Endothelial cell of umbilical vein (primary cell): ENCODE measurements at regions of chr1 and their contacts with region 1.

Region 1: DNA sequence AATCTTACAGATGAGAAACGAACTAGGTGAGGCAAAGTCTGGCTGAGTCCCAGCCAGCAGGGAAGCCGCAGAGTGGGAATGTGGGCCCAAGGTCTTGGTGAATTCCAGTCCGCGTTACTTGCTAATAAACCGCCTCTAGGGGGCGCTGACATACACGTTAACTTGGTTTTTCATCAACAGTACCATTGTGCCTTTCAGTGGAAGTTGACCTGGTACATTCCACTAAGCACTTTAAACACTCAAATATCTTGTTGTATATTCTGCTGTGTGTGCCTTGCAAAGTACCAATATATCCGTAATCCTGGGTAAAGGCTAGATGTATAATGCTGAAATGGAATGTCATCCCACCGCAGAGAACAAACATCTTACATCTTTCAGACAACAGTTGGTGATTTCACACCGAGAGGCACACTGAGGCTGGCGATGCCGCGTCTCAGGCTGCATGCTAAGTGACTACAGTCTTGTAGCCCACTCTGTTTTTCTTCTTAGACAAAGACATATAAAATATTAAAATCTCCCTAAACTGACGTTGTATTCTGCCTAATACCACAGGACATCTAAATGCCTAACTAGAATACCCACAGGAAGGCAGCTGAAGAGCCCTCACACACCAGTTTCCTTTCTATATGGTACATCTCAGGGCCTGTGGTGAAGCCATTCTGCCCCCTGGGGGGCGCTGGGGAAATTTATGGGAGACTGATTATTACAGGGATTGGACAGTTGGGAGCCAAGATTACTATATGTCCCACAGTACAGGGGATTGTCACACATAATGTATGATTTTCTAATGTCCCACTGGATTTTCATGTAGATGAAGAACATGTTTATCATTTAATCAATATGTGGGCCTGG is 49.2 kb upstream of the C1orf198 start:
- DNase-seq: peak; percentile 72
- H3K4me3 ChIP-seq: no peak overlapping the region
- H3K27ac ChIP-seq: no peak overlapping the region
- H3K4me1 ChIP-seq: no peaks in the 10 kb centered on the region
- H3K27me3 ChIP-seq: no peaks in the 10 kb centered on the region
- CTCF ChIP-seq: peak; percentile 73 to 77
- POLR2A ChIP-seq: no peak

Region 2: DNA sequence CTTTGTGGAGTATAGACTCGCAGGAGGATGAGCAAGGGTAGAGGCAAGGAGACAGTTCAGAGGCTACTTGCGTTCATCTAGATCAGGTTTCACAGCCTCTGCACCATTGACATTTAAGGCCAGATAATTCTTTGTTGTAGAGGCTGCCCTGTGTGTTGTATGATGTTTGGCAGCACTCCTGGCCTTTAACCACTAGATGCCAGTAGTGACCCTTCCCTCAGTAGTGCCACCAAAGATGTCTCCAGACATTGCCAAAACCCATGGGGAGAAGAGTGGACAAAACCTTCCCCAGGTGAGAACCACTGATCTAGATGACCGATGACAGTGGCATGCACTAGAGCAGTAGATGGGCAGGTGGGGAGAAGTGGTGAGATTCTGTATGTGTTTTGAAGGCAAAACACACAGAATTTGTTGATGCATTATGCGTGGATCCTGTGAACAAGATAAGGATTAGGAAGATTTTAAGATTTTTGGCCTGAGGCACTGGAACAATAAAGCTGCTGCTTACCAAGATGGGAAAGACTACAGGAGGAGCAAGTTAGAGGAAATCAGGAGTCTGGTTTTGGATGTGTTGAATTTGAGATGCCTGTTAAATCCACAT is 285.1 kb before region 1 on chr1:
- CTCF ChIA-PET with region 1: no interaction called
- POLR2A ChIA-PET with region 1: no interaction called
- dilution Hi-C with region 1: no loop called
- intact Hi-C with region 1: loop called (anchors 2 kb)
- DNase-seq: peak; percentile 15
- H3K4me3 ChIP-seq: no peak overlapping the region
- H3K27ac ChIP-seq: no peak overlapping the region
- H3K4me1 ChIP-seq: no peaks in the 10 kb centered on the region
- H3K27me3 ChIP-seq: peaks cover 0 to 6% of the 10 kb centered on the region in 2 experiments
- CTCF ChIP-seq: peak; percentile 41 to 56
- POLR2A ChIP-seq: no peak

Region 3: DNA sequence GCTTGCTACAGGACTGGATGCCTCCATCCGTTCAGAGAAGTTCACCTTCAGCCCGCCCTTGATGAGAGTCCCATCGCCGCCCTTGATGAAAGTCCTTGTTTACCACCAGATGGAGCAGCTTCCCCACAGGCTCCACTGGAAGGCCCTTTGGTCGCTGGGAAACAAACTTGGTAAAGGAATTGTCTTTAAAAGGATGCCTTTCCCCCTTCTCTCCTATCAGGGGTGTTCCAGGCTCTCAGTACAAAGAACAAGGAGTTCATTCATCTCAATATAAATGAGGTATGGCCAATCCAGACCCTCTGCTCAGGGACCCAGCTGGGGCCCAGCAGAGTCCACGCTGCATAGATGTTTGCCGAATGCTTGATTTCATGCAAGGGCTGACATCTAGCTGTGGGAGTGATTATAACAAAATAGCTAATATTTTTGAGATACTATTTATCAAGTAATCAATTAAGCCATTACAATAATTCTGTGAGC is 119.5 kb before region 1 on chr1:
- CTCF ChIA-PET with region 1: interaction called, 4 read pairs
- POLR2A ChIA-PET with region 1: no interaction called
- dilution Hi-C with region 1: no loop called
- intact Hi-C with region 1: loop called (anchors 1 kb)
- DNase-seq: peak; percentile 50
- H3K4me3 ChIP-seq: no peak overlapping the region
- H3K27ac ChIP-seq: no peak overlapping the region
- H3K4me1 ChIP-seq: no peaks in the 10 kb centered on the region
- H3K27me3 ChIP-seq: no peaks in the 10 kb centered on the region
- CTCF ChIP-seq: peak; percentile 39 to 65
- POLR2A ChIP-seq: no peak

Region 4: DNA sequence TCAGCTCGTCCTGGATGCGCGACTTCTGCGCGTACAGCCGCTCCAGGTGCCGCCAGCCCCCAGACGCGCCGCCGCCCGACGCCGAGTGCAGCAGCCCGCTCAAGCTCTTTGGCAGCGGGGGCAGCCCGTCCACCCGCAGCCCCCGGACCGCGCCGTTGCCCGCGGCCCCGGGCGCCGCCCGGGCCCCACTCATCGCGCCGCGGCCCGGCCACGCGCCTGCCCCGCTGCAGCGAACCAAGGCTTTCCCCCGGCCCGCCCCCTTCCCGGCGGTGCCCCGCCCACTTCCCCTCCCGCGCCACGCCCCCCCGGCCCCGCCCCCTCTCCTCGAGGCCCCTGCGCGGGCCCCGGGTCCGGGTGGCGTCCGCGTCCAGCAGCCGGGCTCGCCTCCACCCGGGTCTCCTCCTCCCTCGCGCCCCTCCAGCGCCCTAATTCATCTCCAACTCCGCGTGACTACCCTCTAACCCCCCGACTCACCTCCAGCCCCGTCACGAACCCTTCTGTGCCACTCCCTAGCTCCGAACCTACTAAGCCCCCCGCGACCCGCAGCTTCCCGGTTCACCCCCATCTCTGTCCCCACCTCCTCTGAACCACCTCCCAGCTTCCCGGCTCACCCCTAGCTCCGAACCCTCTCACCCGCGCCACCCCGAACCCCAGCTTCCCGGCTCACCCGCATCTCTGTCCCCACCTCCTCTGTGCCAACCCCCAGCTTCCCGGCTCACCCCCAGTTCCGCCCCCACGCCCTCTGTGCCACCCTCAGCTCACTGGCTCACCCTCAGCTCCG is 122.7 kb after region 1 on chr1 and contains the start of gene FAM89A:
- CTCF ChIA-PET with region 1: no interaction called
- POLR2A ChIA-PET with region 1: no interaction called
- dilution Hi-C with region 1: no loop called
- intact Hi-C with region 1: loop called (anchors 2 kb)
- DNase-seq: no peak
- H3K4me3 ChIP-seq: peak within 1 kb of the TSS; percentile 64 to 84 (median 65)
- H3K27ac ChIP-seq: no peak within 1 kb of the TSS
- H3K4me1 ChIP-seq: peaks cover 16% of the 10 kb centered on the region
- H3K27me3 ChIP-seq: peaks cover 11 to 28% of the 10 kb centered on the region in 2 experiments
- CTCF ChIP-seq: no peak
- POLR2A ChIP-seq: no peak
- total RNA-seq, gene FAM89A: 13.6 and 24.0 TPM in 2 replicates

Region 5: GRCh38 chr1:231162297-231162969 is 244.9 kb after region 1 on chr1:
- CTCF ChIA-PET with region 1: no interaction called
- POLR2A ChIA-PET with region 1: no interaction called
- dilution Hi-C with region 1: no loop called
- intact Hi-C with region 1: no loop called
- DNase-seq: peak; percentile 34
- H3K4me3 ChIP-seq: peak overlapping the region in 1 of 3 experiments; percentile 19
- H3K27ac ChIP-seq: no peak overlapping the region
- H3K4me1 ChIP-seq: no peaks in the 10 kb centered on the region
- H3K27me3 ChIP-seq: peaks cover 57 to 72% of the 10 kb centered on the region in 2 experiments
- CTCF ChIP-seq: no peak
- POLR2A ChIP-seq: no peak